CD14-positive monocyte (primary cell): ENCODE measurements at regions of chr10 and their contacts with region 1.

Region 1: GRCh38 chr10:26341701-26342100 is 96.4 kb upstream of the APBB1IP start:
- DNase-seq: no peak
- H3K4me3 ChIP-seq: no peak overlapping the region
- H3K4me3 Mint-ChIP-seq: no peak overlapping the region
- H3K27ac ChIP-seq: no peak overlapping the region
- H3K27ac Mint-ChIP-seq: peak overlapping the region in 2 of 7 donors; percentile 29 to 72
- H3K4me1 ChIP-seq: peaks cover 5% of the 10 kb centered on the region in 2 donors
- H3K4me1 Mint-ChIP-seq: peaks cover 4% of the 10 kb centered on the region
- H3K27me3 ChIP-seq: no peaks in the 10 kb centered on the region
- H3K27me3 Mint-ChIP-seq: peaks cover 0 to 1% (median 0%) of the 10 kb centered on the region in 3 donors
- CTCF ChIP-seq: no peak

Region 2: DNA sequence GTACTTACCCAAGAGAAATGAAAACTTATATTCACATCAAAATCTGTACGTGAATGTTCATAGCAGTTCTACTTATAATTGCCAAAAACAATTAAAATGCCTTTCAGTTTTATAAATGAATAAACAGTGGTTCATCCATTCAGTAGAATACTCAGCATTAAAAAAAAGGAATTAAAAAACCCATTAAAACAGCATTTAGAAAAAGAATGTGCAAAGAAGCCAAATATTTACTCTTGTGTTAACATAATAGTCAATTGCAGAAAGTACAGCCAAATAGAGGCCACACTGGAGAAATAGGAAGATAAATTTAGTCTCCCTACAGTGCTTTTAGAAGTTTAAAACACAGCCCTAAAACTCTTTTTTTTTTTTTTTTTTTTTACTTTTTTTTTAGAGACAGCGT is 353.1 kb before region 1 on chr10:
- intact Hi-C with region 1: no loop called
- DNase-seq: no peak
- H3K4me3 ChIP-seq: no peak overlapping the region
- H3K4me3 Mint-ChIP-seq: no peak overlapping the region
- H3K27ac ChIP-seq: no peak overlapping the region
- H3K27ac Mint-ChIP-seq: no peak overlapping the region
- H3K4me1 ChIP-seq: no peaks in the 10 kb centered on the region
- H3K4me1 Mint-ChIP-seq: no peaks in the 10 kb centered on the region
- H3K27me3 ChIP-seq: no peaks in the 10 kb centered on the region
- H3K27me3 Mint-ChIP-seq: peaks cover 0 to 2% (median 0%) of the 10 kb centered on the region in 3 donors
- CTCF ChIP-seq: no peak

Region 3: DNA sequence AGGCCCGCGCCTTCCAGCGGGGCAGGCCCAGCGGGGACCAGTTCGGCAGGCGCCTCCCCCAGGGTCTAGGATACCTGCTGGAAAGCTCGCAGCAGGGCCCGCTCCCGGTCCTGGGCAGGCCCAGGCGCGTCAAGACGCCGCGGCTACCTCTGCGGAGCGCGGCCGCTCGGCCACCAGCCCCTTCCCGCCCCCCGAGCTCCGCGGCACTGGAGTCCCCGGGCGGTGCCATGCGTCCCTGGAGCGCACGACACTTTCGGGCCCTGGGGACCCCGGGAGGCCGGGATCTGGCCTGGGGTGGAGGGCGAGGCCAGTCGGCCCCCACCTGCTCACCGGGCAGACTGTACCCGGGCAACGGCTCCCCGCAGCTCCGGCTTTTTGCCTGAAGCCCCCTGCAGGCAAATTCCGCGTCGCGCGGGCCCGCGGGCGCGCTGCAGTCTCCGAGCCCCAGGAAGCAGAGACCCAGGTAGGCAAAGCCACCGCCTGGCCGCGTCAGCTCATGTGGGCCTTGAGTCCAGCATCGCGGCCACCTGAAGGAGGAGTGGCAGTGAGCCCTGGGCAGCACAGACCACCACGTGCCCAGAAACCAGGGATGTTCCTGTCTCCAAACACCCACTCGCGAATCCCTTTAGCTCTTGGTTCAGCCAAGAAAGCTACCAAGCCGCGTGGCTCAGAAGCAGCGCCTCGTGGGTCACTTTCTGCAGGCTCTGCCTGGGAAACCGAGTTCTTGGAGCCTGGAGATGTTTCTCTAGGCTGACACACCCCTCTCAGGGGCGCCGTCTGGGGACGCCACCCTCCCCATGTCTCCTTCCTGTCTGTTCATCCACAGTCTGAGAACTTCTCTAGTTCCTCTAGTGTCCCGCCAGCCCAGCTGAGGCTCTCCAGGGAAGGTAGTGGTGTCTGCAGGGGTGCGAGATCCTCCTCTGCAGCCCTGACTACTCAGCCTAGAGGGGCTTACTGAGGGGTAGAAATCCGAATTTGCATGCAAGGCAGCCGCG is 50.3 kb after region 1 on chr10:
- intact Hi-C with region 1: loop called in 1 of 2 experiments (anchors 10 kb)
- DNase-seq: peak; percentile 41 to 83 (median 56)
- H3K4me3 ChIP-seq: peak overlapping the region; percentile 38 to 78 (median 55)
- H3K4me3 Mint-ChIP-seq: peak overlapping the region; percentile 74 to 89
- H3K27ac ChIP-seq: peak overlapping the region in 1 of 2 donors; percentile 44
- H3K27ac Mint-ChIP-seq: peak overlapping the region in 5 of 7 donors; percentile 46 to 65 (median 64)
- H3K4me1 ChIP-seq: peaks cover 31% of the 10 kb centered on the region in 2 donors
- H3K4me1 Mint-ChIP-seq: peaks cover 35% of the 10 kb centered on the region
- H3K27me3 ChIP-seq: no peaks in the 10 kb centered on the region
- H3K27me3 Mint-ChIP-seq: peaks cover 2 to 6% (median 3%) of the 10 kb centered on the region in 3 donors
- CTCF ChIP-seq: no peak

Region 4: GRCh38 chr10:26869528-26869927 is 527.8 kb after region 1 on chr10:
- intact Hi-C with region 1: no loop called
- DNase-seq: peak in 2 of 3 donors; percentile 10 to 17
- H3K4me3 ChIP-seq: no peak overlapping the region
- H3K4me3 Mint-ChIP-seq: peak overlapping the region in 1 of 2 donors; percentile 59
- H3K27ac ChIP-seq: no peak overlapping the region
- H3K27ac Mint-ChIP-seq: peak overlapping the region in 2 of 7 donors; percentile 13 to 75
- H3K4me1 ChIP-seq: peaks cover 4 to 6% of the 10 kb centered on the region in 2 donors
- H3K4me1 Mint-ChIP-seq: peaks cover 10% of the 10 kb centered on the region
- H3K27me3 ChIP-seq: no peaks in the 10 kb centered on the region
- H3K27me3 Mint-ChIP-seq: peaks cover 0 to 5% (median 2%) of the 10 kb centered on the region in 3 donors
- CTCF ChIP-seq: no peak